Ascending aorta (tissue), 2 donors: ENCODE measurements at regions of chr5 and their contacts with region 1.

Region 1: GRCh38 chr5:36151434-36152323 is at the starts of genes LMBRD2 and SKP2:
- DNase-seq: peak; percentile 93 to 99
- H3K4me3 ChIP-seq: peak within 1 kb of the TSS; percentile 83 to 92
- H3K27ac ChIP-seq: peak within 1 kb of the TSS; percentile 83 to 84
- H3K4me1 ChIP-seq: peaks cover 0 to 4% of the 10 kb centered on the region in 2 donors
- H3K27me3 ChIP-seq: no peaks in the 10 kb centered on the region
- CTCF ChIP-seq: peak in 1 of 3 experiments; percentile 4
- total RNA-seq, gene LMBRD2: 24.5 TPM
- total RNA-seq, gene SKP2: 14.4 TPM

Region 2: DNA sequence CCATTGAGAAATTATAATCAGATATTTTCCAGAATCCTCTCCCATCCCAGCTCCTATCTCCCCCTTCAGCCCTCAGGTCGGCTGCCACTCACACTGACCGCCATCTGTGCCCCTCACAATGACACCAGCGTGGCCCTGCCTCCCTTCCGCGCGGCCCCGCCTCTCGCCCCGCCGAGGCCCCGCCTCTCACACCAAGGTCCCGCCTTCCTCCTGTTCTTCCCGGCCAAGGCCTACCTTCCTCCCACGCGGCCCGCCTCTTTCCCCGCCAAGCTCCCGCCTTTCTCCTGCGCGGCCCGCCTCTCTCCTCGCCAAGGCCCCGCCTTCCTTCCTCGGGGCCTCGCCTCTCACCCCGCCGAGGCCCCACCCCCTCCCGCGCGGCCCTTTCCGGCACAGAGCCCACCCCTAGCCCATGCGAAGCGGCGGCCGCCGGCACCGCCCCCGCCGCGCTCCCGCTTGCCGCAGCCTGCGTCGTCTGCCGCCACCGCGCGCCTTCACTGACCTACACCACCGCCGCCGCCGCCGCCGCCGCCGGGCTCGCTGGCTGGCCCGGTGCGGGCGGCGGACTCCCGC is 1222.4 kb before region 1 on chr5 and contains the start of gene DNAJC21:
- intact Hi-C with region 1: loop called (anchors 5 kb)
- DNase-seq: peak; percentile 92 to 99
- H3K4me3 ChIP-seq: peak within 1 kb of the TSS; percentile 64 to 72
- H3K27ac ChIP-seq: peak within 1 kb of the TSS; percentile 87 to 98
- H3K4me1 ChIP-seq: peaks cover 0 to 15% of the 10 kb centered on the region in 2 donors
- H3K27me3 ChIP-seq: no peaks in the 10 kb centered on the region
- CTCF ChIP-seq: no peak
- total RNA-seq, gene DNAJC21: 30.5 TPM

Region 3: GRCh38 chr5:35904443-35905132 is 247.1 kb before region 1 on chr5:
- intact Hi-C with region 1: no loop called
- DNase-seq: no peak
- H3K4me3 ChIP-seq: no peak overlapping the region
- H3K27ac ChIP-seq: no peak overlapping the region
- H3K4me1 ChIP-seq: no peaks in the 10 kb centered on the region
- H3K27me3 ChIP-seq: no peaks in the 10 kb centered on the region
- CTCF ChIP-seq: no peak

Region 4: DNA sequence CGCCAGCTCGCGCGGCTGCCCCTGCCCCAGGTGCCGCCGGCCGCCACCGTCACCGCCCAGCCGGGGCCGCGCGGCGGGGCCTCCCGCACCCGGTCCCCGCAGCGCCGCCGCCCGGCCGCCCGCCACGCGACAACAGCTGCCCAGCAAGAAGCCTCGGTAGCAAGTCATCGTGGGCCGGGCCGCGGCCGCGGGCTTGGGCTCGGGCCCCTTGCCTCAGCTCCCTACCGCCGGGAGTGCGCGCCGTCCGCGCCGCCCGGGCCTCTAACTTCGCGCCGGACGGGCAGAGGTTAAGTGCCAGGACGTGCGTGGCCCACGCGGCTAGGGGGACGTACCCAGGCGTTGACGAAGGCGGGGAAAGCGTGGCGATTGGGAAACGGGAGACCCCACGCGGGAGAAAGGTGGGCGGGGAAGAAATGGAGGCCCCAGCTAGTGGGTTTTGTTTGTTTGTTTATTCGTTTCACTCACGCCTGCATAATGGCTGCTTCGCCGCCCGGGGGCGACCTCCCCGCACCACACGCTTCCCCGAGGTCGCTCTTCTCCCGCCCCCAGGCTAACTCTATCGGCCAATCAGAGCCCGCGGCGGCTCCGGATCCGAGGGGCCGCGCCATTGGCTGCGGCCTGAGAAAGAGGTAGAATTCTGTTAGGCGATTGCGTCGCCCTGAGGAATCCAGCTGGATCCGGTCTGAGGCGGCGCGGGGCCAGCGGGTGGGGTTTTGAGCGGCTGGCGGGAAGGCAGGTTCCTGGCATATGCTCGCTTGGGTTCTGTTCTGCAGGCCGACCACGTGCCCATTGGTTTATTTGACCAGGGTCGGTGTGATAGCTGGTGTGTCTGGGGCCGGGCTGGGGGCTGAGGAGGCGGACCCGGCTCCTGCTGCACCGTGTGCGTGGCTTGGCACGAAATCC is 90.2 kb after region 1 on chr5 and contains the start of gene NADK2:
- intact Hi-C with region 1: loop called (anchors 2 kb)
- DNase-seq: peak; percentile 90 to 98
- H3K4me3 ChIP-seq: peak within 1 kb of the TSS; percentile 65 to 88
- H3K27ac ChIP-seq: peak within 1 kb of the TSS; percentile 93 to 95
- H3K4me1 ChIP-seq: peaks cover 0 to 8% of the 10 kb centered on the region in 2 donors
- H3K27me3 ChIP-seq: no peaks in the 10 kb centered on the region
- CTCF ChIP-seq: peak; percentile 60 to 84 (median 74)
- total RNA-seq, gene NADK2: 18.4 TPM

Region 5: GRCh38 chr5:36373527-36374086 is 221.9 kb after region 1 on chr5:
- intact Hi-C with region 1: no loop called
- DNase-seq: peak; percentile 72 to 87
- H3K4me3 ChIP-seq: no peak overlapping the region
- H3K27ac ChIP-seq: peak overlapping the region in 1 of 2 donors; percentile 33
- H3K4me1 ChIP-seq: no peaks in the 10 kb centered on the region
- H3K27me3 ChIP-seq: no peaks in the 10 kb centered on the region
- CTCF ChIP-seq: no peak

Region 6: GRCh38 chr5:37370864-37371726 is 1219.4 kb after region 1 on chr5 and contains the start of gene NUP155:
- intact Hi-C with region 1: loop called (anchors 2 kb)
- DNase-seq: peak; percentile 67 to 95
- H3K4me3 ChIP-seq: peak within 1 kb of the TSS; percentile 78 to 84
- H3K27ac ChIP-seq: peak within 1 kb of the TSS; percentile 64 to 89
- H3K4me1 ChIP-seq: peaks cover 0 to 12% of the 10 kb centered on the region in 2 donors
- H3K27me3 ChIP-seq: no peaks in the 10 kb centered on the region
- CTCF ChIP-seq: no peak
- total RNA-seq, gene NUP155: 62.3 TPM